Body of pancreas (tissue), 4 donors: ENCODE measurements at regions of chr3 and their contacts with region 1.

Region 1: GRCh38 chr3:151168269-151169094 is 34.5 kb downstream of the GPR171 start:
- DNase-seq: peak; percentile 75 to 86 (median 78)
- ATAC-seq: peak; percentile 86
- H3K4me3 ChIP-seq: no peak overlapping the region
- H3K27ac ChIP-seq: peak overlapping the region in 1 of 4 donors; percentile 66
- H3K4me1 ChIP-seq: no peaks in the 10 kb centered on the region
- H3K27me3 ChIP-seq: no peaks in the 10 kb centered on the region
- CTCF ChIP-seq: peak; percentile 44 to 82 (median 70)
- POLR2A ChIP-seq: no peak

Region 2: DNA sequence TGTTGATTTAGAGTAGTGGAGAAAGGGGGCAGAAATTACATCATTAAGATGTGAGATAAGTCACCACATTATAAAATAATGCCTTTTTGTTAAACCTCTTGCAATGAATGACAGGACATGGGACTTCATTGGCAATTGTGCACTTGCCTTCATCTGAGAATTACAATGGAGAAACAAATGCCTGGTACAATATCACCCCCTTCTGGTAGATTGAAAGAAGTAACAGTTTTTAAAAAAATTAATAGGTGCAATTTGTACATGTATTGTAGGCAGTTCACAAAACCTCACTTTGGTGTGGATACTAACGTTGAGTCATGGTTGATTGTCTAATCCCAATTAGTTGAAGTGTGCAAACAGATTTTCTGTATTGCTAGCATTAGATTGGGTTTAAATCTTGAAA is 114.4 kb after region 1 on chr3:
- intact Hi-C with region 1: loop called (anchors 5 kb)
- DNase-seq: no peak
- ATAC-seq: peak; percentile 77
- H3K4me3 ChIP-seq: no peak overlapping the region
- H3K27ac ChIP-seq: no peak overlapping the region
- H3K4me1 ChIP-seq: peaks cover 3% of the 10 kb centered on the region
- H3K27me3 ChIP-seq: no peaks in the 10 kb centered on the region
- CTCF ChIP-seq: peak; percentile 23 to 80 (median 65)
- POLR2A ChIP-seq: no peak